Dendritic cell treated with granulocyte-macrophage colony-stimulating factor and Interleukin-4, amounts not matched to agents 40 ng/mL and 50 ng/mL, for 4 days (primary cell): ENCODE measurements at regions of chr20 and their contacts with region 1.

Region 1: DNA sequence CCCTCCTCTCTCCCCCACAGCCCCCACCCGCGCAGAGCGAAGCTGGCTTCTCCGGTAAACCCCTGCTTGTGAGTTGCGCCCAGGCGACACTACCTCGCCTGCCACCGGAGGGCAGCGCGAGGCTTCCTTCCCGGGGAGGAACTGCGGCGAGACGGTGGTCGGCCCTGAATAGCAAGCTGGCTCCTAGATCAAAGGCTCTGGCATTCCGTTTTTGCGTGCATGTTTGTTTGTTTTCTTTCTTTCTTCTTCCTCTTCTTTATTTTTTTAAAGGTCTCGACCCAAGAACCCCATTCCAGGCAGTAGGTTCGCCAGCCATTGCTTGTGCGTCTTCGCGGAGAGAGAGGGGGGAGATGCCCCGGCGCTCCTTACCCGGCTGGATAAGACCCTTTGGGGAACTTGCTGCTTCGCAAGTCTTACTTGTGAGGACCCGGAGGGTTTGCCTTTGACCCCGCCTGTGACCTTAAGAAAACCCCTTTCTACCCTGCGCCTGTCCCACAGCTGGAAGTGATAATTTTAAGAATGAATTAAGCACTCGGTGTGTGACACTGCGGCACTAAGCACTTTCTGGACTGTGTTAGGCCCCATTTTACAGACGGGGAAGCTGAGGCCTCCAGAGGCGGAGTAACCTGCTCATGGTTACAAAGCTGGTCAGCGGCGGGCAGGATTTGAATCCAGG is 92.7 kb upstream of the SIRPA start:
- H3K4me3 Mint-ChIP-seq: peak overlapping the region; percentile 78
- H3K27ac Mint-ChIP-seq: peak overlapping the region; percentile 94
- H3K4me1 Mint-ChIP-seq: peaks cover 59% of the 10 kb centered on the region
- H3K27me3 Mint-ChIP-seq: peaks cover 15% of the 10 kb centered on the region

Region 2: GRCh38 chr20:728248-728944 is 1074.1 kb before region 1 on chr20:
- intact Hi-C with region 1: no loop called
- H3K4me3 Mint-ChIP-seq: peak overlapping the region; percentile 57
- H3K27ac Mint-ChIP-seq: no peak overlapping the region
- H3K4me1 Mint-ChIP-seq: peaks cover 18% of the 10 kb centered on the region
- H3K27me3 Mint-ChIP-seq: peaks cover 69% of the 10 kb centered on the region

Region 3: DNA sequence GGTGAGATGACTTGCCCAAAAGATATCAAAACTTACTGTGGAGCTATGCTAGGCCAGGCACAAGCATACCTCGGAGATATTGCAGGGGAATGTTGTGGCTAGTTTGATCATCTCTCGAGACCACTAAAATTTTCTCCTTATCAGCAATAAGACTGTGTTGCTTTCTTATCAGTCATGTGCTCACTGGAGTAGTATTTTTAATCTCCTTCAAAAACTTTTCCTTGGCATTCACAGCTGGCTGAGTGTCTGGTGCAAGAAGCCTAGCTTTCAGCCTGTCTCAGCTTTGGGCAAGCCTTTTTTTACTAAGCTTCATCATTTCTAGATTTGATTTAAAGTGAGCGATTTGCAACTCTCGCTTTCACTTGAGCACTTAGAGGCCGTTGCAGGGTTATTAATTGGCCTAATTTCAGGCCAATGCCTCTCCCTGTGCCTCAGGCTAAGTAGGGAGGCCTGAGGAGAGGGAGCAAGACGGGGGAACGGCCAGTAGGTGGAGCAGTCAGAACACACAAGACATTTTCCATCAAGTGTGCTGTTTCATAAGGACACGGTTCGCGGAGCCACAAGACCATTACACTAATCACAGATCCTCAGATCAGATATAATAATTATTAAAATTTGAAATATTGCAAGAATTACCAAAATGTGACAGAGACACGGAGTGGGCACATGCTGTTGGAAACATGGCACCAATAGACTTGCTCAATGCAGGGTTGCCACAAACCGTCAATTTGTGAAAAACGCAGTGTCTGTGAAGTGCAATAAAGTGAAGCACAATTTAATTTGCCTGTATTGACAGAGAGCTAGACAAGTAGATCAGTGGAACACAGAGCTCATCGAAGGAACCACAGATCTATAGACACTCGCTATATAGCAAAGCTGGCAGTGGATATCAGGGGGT is 38.1 kb before region 1 on chr20:
- intact Hi-C with region 1: loop called (anchors 5 kb)
- H3K4me3 Mint-ChIP-seq: no peak overlapping the region
- H3K27ac Mint-ChIP-seq: no peak overlapping the region
- H3K4me1 Mint-ChIP-seq: peaks cover 17% of the 10 kb centered on the region
- H3K27me3 Mint-ChIP-seq: peaks cover 3% of the 10 kb centered on the region

Region 4: GRCh38 chr20:1820138-1821079 is 17.9 kb after region 1 on chr20:
- intact Hi-C with region 1: loop called (anchors 2 kb)
- H3K4me3 Mint-ChIP-seq: no peak overlapping the region
- H3K27ac Mint-ChIP-seq: peak overlapping the region; percentile 98
- H3K4me1 Mint-ChIP-seq: peaks cover 92% of the 10 kb centered on the region
- H3K27me3 Mint-ChIP-seq: no peaks in the 10 kb centered on the region

Region 5: DNA sequence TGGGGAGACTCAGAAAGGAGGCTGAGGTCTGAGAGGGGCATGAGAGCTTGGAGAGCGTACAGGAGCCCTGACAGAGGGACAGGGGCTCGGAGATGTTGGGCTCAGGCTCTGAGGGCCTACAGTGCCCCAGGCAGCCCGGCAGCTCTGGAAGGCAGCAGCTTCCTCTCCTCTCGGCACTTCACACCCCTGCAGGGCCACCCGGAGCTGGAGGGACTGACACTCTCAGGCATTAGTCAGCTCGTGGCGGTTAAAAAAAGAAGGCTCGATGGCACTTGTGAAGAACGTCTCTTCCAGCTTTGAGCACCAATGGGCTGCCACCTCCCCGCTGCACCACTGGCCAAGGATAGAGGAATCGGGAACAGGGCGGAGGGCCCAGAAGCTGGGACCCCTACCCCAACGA is 30.1 kb after region 1 on chr20:
- intact Hi-C with region 1: no loop called
- H3K4me3 Mint-ChIP-seq: no peak overlapping the region
- H3K27ac Mint-ChIP-seq: peak overlapping the region; percentile 87
- H3K4me1 Mint-ChIP-seq: peaks cover 83% of the 10 kb centered on the region
- H3K27me3 Mint-ChIP-seq: peaks cover 2% of the 10 kb centered on the region

Region 6: DNA sequence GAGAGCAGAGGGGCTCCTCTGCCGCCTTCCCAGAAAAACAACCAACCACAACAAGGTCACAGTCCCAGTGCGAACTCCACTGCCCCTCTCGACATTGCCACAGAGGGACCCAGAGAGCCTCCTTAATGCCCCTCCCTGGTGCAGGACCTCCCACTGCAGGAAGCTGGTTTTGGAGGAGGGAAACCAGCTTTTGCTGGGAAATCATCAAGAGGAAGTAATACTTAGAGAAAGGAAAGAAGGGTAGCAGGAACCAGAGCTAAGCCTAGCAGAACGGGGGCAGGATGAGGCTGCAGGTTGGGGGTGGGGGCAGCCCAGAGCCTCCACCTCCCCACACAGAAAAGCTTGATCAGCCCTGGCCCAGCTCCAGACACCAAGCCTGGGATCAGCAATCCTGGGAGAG is 54.9 kb after region 1 on chr20:
- intact Hi-C with region 1: loop called (anchors 5 kb)
- H3K4me3 Mint-ChIP-seq: no peak overlapping the region
- H3K27ac Mint-ChIP-seq: no peak overlapping the region
- H3K4me1 Mint-ChIP-seq: peaks cover 69% of the 10 kb centered on the region
- H3K27me3 Mint-ChIP-seq: peaks cover 10% of the 10 kb centered on the region

Region 7: GRCh38 chr20:1881240-1881835 is 78.8 kb after region 1 on chr20:
- intact Hi-C with region 1: loop called (anchors 5 kb)
- H3K4me3 Mint-ChIP-seq: no peak overlapping the region
- H3K27ac Mint-ChIP-seq: peak overlapping the region; percentile 20
- H3K4me1 Mint-ChIP-seq: peaks cover 55% of the 10 kb centered on the region
- H3K27me3 Mint-ChIP-seq: peaks cover 71% of the 10 kb centered on the region

Region 8: DNA sequence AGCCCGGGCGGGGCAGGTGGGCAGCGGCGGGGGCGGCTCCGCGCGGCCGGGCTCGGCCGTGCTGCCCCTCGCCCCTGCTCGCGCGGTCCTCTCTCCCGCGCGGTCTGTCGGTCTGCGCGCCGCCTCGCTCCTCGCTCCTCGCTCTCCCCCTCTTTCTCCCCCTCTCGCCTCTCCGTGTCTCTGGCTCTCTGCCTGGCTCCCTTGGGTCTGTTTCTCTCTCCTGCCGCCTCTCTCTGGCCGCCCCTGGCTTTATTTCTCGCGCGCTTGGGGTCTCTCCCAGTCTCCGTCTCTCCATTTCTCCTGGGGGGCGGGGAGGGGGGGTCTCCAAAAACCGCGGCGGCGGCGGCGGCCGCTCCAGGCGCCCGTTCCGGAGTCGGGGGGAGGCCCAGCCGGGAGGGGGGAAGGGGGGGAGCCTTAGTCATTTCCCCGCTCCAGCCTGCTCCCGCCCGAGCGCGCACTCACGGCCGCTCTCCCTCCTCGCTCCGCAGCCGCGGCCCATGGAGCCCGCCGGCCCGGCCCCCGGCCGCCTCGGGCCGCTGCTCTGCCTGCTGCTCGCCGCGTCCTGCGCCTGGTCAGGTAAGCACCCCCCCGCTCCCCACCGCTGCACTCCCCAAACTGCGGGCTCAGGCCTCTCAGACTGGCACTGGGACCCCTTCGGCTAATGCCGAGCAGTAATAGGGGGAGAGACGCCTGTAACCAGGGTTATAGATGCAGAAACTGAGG is 92.6 kb after region 1 on chr20 and contains the start of gene SIRPA:
- intact Hi-C with region 1: loop called (anchors 2 kb)
- H3K4me3 Mint-ChIP-seq: peak within 1 kb of the TSS; percentile 97
- H3K27ac Mint-ChIP-seq: peak within 1 kb of the TSS; percentile 98
- H3K4me1 Mint-ChIP-seq: peaks cover 81% of the 10 kb centered on the region
- H3K27me3 Mint-ChIP-seq: peaks cover 1% of the 10 kb centered on the region